B cell (primary cell): ENCODE measurements at regions of chr17 and their contacts with region 1.

Region 1: GRCh38 chr17:7329374-7329996 is 350 bp upstream of the NEURL4 start:
- DNase-seq: peak; percentile 100
- ATAC-seq: peak; percentile 71
- H3K4me3 ChIP-seq: peak overlapping the region; percentile 65 to 92 (median 81)
- H3K4me3 Mint-ChIP-seq: peak overlapping the region; percentile 96
- H3K27ac ChIP-seq: peak overlapping the region; percentile 86 to 93
- H3K27ac Mint-ChIP-seq: peak overlapping the region; percentile 98
- H3K4me1 ChIP-seq: peaks cover 23 to 46% of the 10 kb centered on the region in 2 donors
- H3K4me1 Mint-ChIP-seq: peaks cover 40% of the 10 kb centered on the region
- H3K27me3 ChIP-seq: no peaks in the 10 kb centered on the region
- H3K27me3 Mint-ChIP-seq: no peaks in the 10 kb centered on the region
- CTCF ChIP-seq: no peak

Region 2: DNA sequence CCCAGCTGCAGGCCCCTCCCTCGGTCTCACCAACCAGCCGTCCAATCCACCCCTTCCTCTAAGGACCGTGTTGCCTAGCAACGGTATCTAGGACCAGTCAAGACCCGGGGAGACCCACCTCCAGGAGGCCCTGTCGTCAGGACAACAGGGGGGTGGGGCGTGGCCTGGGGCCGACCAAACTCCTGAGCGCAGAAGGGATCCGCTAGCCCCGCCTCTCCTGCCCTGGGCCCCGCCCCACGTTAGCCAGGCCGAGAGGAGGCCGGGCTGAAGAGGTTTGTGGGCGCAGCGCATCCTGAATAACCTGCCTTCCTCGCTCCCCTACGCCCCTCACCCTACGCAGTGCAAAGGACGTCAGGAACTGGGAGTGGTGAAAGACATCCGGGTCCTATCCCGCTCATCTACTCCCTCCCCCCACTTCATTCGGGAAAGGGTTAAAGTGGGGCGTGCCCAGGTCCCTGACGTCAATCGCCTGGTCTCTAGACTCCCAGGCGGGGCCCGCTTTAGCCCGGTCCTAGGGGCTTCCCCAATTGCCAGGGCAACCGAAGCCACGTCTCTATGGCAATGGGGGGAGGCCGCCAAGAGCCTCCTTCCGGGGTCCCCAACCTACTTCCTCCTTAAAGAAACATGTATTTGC is 124.5 kb before region 1 on chr17:
- CTCF ChIA-PET with region 1: no interaction called
- POLR2A ChIA-PET with region 1: no interaction called
- intact Hi-C with region 1: loop called (anchors 1 kb)
- DNase-seq: peak; percentile 99
- ATAC-seq: peak; percentile 85
- H3K4me3 ChIP-seq: peak overlapping the region in 4 of 5 experiments; percentile 49 to 65 (median 55)
- H3K4me3 Mint-ChIP-seq: peak overlapping the region; percentile 82
- H3K27ac ChIP-seq: peak overlapping the region; percentile 86 to 93
- H3K27ac Mint-ChIP-seq: peak overlapping the region; percentile 91
- H3K4me1 ChIP-seq: peaks cover 17 to 25% of the 10 kb centered on the region in 2 donors
- H3K4me1 Mint-ChIP-seq: peaks cover 28% of the 10 kb centered on the region
- H3K27me3 ChIP-seq: no peaks in the 10 kb centered on the region
- H3K27me3 Mint-ChIP-seq: peaks cover under 1% of the 10 kb centered on the region
- CTCF ChIP-seq: no peak

Region 3: GRCh38 chr17:7239091-7240027 is 90.1 kb before region 1 on chr17 and contains the start of gene PHF23:
- CTCF ChIA-PET with region 1: interaction called, 3 read pairs
- POLR2A ChIA-PET with region 1: interaction called, 8 read pairs
- intact Hi-C with region 1: loop called (anchors 1 kb)
- DNase-seq: peak; percentile 98
- ATAC-seq: peak; percentile 64
- H3K4me3 ChIP-seq: peak within 1 kb of the TSS; percentile 74 to 97 (median 75)
- H3K4me3 Mint-ChIP-seq: peak within 1 kb of the TSS; percentile 98
- H3K27ac ChIP-seq: peak within 1 kb of the TSS; percentile 55 to 97
- H3K27ac Mint-ChIP-seq: peak within 1 kb of the TSS; percentile 100
- H3K4me1 ChIP-seq: peaks cover 42 to 49% of the 10 kb centered on the region in 2 donors
- H3K4me1 Mint-ChIP-seq: peaks cover 61% of the 10 kb centered on the region
- H3K27me3 ChIP-seq: no peaks in the 10 kb centered on the region
- H3K27me3 Mint-ChIP-seq: no peaks in the 10 kb centered on the region
- CTCF ChIP-seq: no peak
- total RNA-seq, gene PHF23: 42.3 and 45.8 TPM in 2 replicates

Region 4: GRCh38 chr17:7296189-7296902 is 33.1 kb before region 1 on chr17:
- CTCF ChIA-PET with region 1: interaction called, 16 read pairs
- POLR2A ChIA-PET with region 1: interaction called, 3 read pairs
- intact Hi-C with region 1: no loop called
- DNase-seq: peak; percentile 84
- ATAC-seq: peak; percentile 58
- H3K4me3 ChIP-seq: peak overlapping the region in 2 of 5 experiments; percentile 12 to 14
- H3K4me3 Mint-ChIP-seq: peak overlapping the region; percentile 83
- H3K27ac ChIP-seq: no peak overlapping the region
- H3K27ac Mint-ChIP-seq: peak overlapping the region; percentile 47
- H3K4me1 ChIP-seq: peaks cover 28 to 30% of the 10 kb centered on the region in 2 donors
- H3K4me1 Mint-ChIP-seq: peaks cover 22% of the 10 kb centered on the region
- H3K27me3 ChIP-seq: peaks cover 0 to 52% (median 14%) of the 10 kb centered on the region in 4 experiments
- H3K27me3 Mint-ChIP-seq: peaks cover 36% of the 10 kb centered on the region
- CTCF ChIP-seq: peak; percentile 93

Region 5: GRCh38 chr17:7344399-7344798 is 14.9 kb after region 1 on chr17:
- CTCF ChIA-PET with region 1: interaction called, 53 read pairs
- POLR2A ChIA-PET with region 1: interaction called, 17 read pairs
- intact Hi-C with region 1: loop called (anchors 1 kb)
- DNase-seq: no peak
- ATAC-seq: no peak
- H3K4me3 ChIP-seq: no peak overlapping the region
- H3K4me3 Mint-ChIP-seq: no peak overlapping the region
- H3K27ac ChIP-seq: no peak overlapping the region
- H3K27ac Mint-ChIP-seq: no peak overlapping the region
- H3K4me1 ChIP-seq: peaks cover 0 to 6% of the 10 kb centered on the region in 2 donors
- H3K4me1 Mint-ChIP-seq: peaks cover 7% of the 10 kb centered on the region
- H3K27me3 ChIP-seq: no peaks in the 10 kb centered on the region
- H3K27me3 Mint-ChIP-seq: no peaks in the 10 kb centered on the region
- CTCF ChIP-seq: no peak

Region 6: DNA sequence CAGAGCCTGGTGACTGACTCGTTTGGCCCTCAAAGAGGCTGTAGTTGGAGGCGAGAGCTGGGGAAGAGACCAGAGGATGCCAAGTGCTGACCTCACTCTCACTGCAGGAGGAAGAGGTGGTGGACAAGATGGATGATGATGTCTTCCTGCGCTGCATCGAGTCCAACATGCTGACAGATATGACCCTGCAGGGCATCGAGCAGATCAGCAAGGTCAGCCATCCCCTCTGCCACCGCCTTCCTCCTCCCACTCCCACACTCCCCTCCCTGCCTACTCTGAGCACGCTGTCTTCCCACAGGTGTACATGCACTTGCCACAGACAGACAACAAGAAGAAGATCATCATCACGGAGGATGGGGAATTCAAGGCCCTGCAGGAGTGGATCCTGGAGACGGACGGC is 181.6 kb after region 1 on chr17:
- CTCF ChIA-PET with region 1: no interaction called
- POLR2A ChIA-PET with region 1: no interaction called
- intact Hi-C with region 1: no loop called
- DNase-seq: peak; percentile 28
- ATAC-seq: no peak
- H3K4me3 ChIP-seq: no peak overlapping the region
- H3K4me3 Mint-ChIP-seq: no peak overlapping the region
- H3K27ac ChIP-seq: no peak overlapping the region
- H3K27ac Mint-ChIP-seq: no peak overlapping the region
- H3K4me1 ChIP-seq: no peaks in the 10 kb centered on the region
- H3K4me1 Mint-ChIP-seq: no peaks in the 10 kb centered on the region
- H3K27me3 ChIP-seq: no peaks in the 10 kb centered on the region
- H3K27me3 Mint-ChIP-seq: no peaks in the 10 kb centered on the region
- CTCF ChIP-seq: no peak